ENCODE measurements at regions of chr9 and their contacts with region 1.

Region 1: DNA sequence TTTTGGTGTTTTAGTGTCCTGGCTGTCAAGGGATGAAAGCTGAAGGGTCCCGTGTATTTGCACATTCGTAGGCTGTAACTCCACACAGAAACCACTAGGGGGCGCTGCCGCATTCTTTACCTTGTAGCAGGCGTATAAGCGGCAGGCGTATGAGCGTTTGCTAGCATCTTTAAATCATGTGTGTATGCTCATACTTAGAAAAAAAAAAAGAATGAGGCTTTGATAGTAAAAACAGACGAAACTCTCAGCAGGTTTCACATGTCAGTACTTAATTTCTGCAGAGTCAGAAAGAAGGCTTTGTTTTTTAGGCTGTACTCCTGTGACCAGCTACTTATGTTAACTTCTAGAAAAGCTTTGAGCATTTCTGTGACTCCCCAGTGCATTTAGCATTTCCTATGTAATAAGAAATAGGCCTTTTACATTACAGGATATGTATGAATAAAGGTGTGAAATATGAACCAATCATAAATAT is 218.8 kb upstream of the ADAMTSL1 start:
- DNase-seq: peak; percentile 42 to 59 (median 56)
- H3K4me3 ChIP-seq: no peak overlapping the region
- H3K4me3 Mint-ChIP-seq: no peak overlapping the region
- H3K27ac ChIP-seq: no peak overlapping the region
- H3K27ac Mint-ChIP-seq: no peak overlapping the region
- H3K4me1 ChIP-seq: no peaks in the 10 kb centered on the region
- H3K4me1 Mint-ChIP-seq: peaks cover 0 to 4% (median 2%) of the 10 kb centered on the region in 4 donors
- H3K27me3 ChIP-seq: no peaks in the 10 kb centered on the region
- H3K27me3 Mint-ChIP-seq: peaks cover 8% of the 10 kb centered on the region in 2 donors

Region 2: GRCh38 chr9:18238254-18238653 is 16.9 kb before region 1 on chr9:
- CTCF ChIA-PET with region 1: interaction called, 14 read pairs
- POLR2A ChIA-PET with region 1: no interaction called
- intact Hi-C with region 1: no loop called
- DNase-seq: no peak
- H3K4me3 ChIP-seq: no peak overlapping the region
- H3K4me3 Mint-ChIP-seq: no peak overlapping the region
- H3K27ac ChIP-seq: no peak overlapping the region
- H3K27ac Mint-ChIP-seq: peak overlapping the region in 1 of 7 donors; percentile 12
- H3K4me1 ChIP-seq: no peaks in the 10 kb centered on the region
- H3K4me1 Mint-ChIP-seq: no peaks in the 10 kb centered on the region
- H3K27me3 ChIP-seq: no peaks in the 10 kb centered on the region
- H3K27me3 Mint-ChIP-seq: peaks cover 0 to under 1% of the 10 kb centered on the region in 2 donors

Region 3: DNA sequence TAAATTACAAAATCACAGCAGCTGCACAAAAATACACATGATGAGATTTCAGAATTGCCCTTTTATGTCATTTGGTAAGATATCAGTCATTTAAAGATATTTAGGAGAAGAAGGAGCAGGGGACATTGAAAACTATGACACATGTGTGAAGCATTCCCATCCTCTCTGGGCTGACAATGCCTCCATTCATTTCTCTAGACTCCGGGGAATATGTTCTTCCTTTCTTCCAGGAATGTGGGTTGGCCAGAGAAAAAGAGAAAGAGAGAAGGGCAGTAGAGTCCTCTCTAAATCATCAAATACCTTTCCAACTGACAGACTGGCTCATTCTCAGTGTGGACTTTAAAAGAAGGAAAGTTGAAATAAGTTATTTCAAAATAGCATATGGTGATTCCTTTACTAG is 13.2 kb after region 1 on chr9:
- CTCF ChIA-PET with region 1: interaction called, 67 read pairs
- POLR2A ChIA-PET with region 1: no interaction called
- intact Hi-C with region 1: no loop called
- DNase-seq: no peak
- H3K4me3 ChIP-seq: no peak overlapping the region
- H3K4me3 Mint-ChIP-seq: no peak overlapping the region
- H3K27ac ChIP-seq: no peak overlapping the region
- H3K27ac Mint-ChIP-seq: no peak overlapping the region
- H3K4me1 ChIP-seq: no peaks in the 10 kb centered on the region
- H3K4me1 Mint-ChIP-seq: no peaks in the 10 kb centered on the region
- H3K27me3 ChIP-seq: no peaks in the 10 kb centered on the region
- H3K27me3 Mint-ChIP-seq: peaks cover 0 to 3% of the 10 kb centered on the region in 2 donors

Region 4: DNA sequence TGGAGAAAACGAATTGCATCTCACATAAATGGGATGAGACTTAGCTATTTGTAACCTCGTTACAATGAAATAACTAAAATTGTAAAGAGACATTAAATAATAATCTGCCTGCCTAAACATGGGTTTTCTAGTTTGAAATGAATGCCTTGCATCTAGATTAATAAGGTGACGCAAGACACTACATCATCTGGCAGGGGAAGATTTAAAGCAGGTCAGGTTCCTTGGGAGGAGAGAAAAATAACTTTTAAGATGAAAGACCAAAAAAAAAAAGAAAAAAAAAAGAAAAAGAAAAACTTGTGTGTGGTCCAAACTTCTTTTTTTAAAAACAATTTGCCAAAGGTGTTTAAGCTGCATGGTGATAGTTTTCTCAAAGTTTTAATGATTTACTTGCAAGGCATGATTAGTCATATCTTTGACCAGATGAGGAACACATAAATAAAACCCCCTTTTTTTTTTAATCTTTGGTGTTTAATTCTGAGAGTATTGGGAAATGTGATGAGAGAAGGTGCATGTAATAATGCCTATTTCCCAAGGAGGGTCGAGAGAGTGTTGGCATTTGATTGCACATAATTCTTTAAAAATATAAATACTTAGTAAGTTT is 95.9 kb after region 1 on chr9:
- CTCF ChIA-PET with region 1: no interaction called
- POLR2A ChIA-PET with region 1: no interaction called
- intact Hi-C with region 1: no loop called
- DNase-seq: no peak
- H3K4me3 ChIP-seq: no peak overlapping the region
- H3K4me3 Mint-ChIP-seq: no peak overlapping the region
- H3K27ac ChIP-seq: no peak overlapping the region
- H3K27ac Mint-ChIP-seq: no peak overlapping the region
- H3K4me1 ChIP-seq: no peaks in the 10 kb centered on the region
- H3K4me1 Mint-ChIP-seq: no peaks in the 10 kb centered on the region
- H3K27me3 ChIP-seq: no peaks in the 10 kb centered on the region
- H3K27me3 Mint-ChIP-seq: peaks cover 0 to 1% of the 10 kb centered on the region in 2 donors

Region 5: GRCh38 chr9:19028835-19029451 is 773.7 kb after region 1 on chr9:
- CTCF ChIA-PET with region 1: interaction called, 28 read pairs
- POLR2A ChIA-PET with region 1: no interaction called
- intact Hi-C with region 1: no loop called
- DNase-seq: peak in 4 of 5 donors; percentile 21 to 35 (median 24)
- H3K4me3 ChIP-seq: no peak overlapping the region
- H3K4me3 Mint-ChIP-seq: peak overlapping the region in 1 of 8 donors; percentile 37
- H3K27ac ChIP-seq: no peak overlapping the region
- H3K27ac Mint-ChIP-seq: no peak overlapping the region
- H3K4me1 ChIP-seq: no peaks in the 10 kb centered on the region
- H3K4me1 Mint-ChIP-seq: peaks cover 0 to 2% (median 0%) of the 10 kb centered on the region in 4 donors
- H3K27me3 ChIP-seq: peaks cover 4% of the 10 kb centered on the region
- H3K27me3 Mint-ChIP-seq: peaks cover 4 to 11% of the 10 kb centered on the region in 2 donors